ENCODE measurements at regions of chr18 and their contacts with region 1.

Region 1: GRCh38 chr18:49510393-49511115 is 23.5 kb upstream of the C18orf32 start:
- DNase-seq: no peak
- ATAC-seq: peak; percentile 65

Region 2: GRCh38 chr18:49768051-49768391 is 257.5 kb after region 1 on chr18:
- intact Hi-C with region 1: loop called (anchors 5 kb)
- DNase-seq: no peak
- ATAC-seq: peak; percentile 62

Region 3: GRCh38 chr18:49858309-49859020 is 347.9 kb after region 1 on chr18:
- intact Hi-C with region 1: loop called (anchors 2 kb)
- DNase-seq: no peak
- ATAC-seq: peak; percentile 62

Region 4: GRCh38 chr18:50194631-50195532 is 684.3 kb after region 1 on chr18 and contains the start of gene MYO5B:
- intact Hi-C with region 1: loop called (anchors 10 kb)
- DNase-seq: no peak
- ATAC-seq: peak; percentile 79
- total RNA-seq, gene MYO5B: 0.89 TPM

Measured in Right ventricle myocardium inferior (tissue), 1 donor.